ENCODE measurements at regions of chr11 and their contacts with region 1.

Region 1: GRCh38 chr11:6443269-6444003 is 2.6 kb upstream of the HPX start:
- DNase-seq: no peak
- H3K4me3 ChIP-seq: no peak overlapping the region
- H3K27ac ChIP-seq: no peak overlapping the region
- H3K4me1 ChIP-seq: peaks cover 0 to 3% (median 0%) of the 10 kb centered on the region in 3 donors
- H3K27me3 ChIP-seq: no peaks in the 10 kb centered on the region
- CTCF ChIP-seq: peak; percentile 64 to 80 (median 73)
- POLR2A ChIP-seq: no peak

Region 2: GRCh38 chr11:6505577-6506240 is 62.3 kb after region 1 on chr11:
- intact Hi-C with region 1: loop called (anchors 10 kb)
- DNase-seq: no peak
- H3K4me3 ChIP-seq: no peak overlapping the region
- H3K27ac ChIP-seq: no peak overlapping the region
- H3K4me1 ChIP-seq: peaks cover 0 to 5% (median 0%) of the 10 kb centered on the region in 3 donors
- H3K27me3 ChIP-seq: no peaks in the 10 kb centered on the region
- CTCF ChIP-seq: peak; percentile 48 to 81 (median 64)
- POLR2A ChIP-seq: no peak

Region 3: GRCh38 chr11:6693342-6694228 is 250.1 kb after region 1 on chr11:
- intact Hi-C with region 1: no loop called
- DNase-seq: no peak
- H3K4me3 ChIP-seq: no peak overlapping the region
- H3K27ac ChIP-seq: peak overlapping the region in 1 of 4 donors; percentile 51
- H3K4me1 ChIP-seq: peaks cover 0 to 19% (median 16%) of the 10 kb centered on the region in 3 donors
- H3K27me3 ChIP-seq: no peaks in the 10 kb centered on the region
- CTCF ChIP-seq: no peak
- POLR2A ChIP-seq: no peak